ENCODE measurements at regions of chr3 and their contacts with region 1.

Region 1: DNA sequence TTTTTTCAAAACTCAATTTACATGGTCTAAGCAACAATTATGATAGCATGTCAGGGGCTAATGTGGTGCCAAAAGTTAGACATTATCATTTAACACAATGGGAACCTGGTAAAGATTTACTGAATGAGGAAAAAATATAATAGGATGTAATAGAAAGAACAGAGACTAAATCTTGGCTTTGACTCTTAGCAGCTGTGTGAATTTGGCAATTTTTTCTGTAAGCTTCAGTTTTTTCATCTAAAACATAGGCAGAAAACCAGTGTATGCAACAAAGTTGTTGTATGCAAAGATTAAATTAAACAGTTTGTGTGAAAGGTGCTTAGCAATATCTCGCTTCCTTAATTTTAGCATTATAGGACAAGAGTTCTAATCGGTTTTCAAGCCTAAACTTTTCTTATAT is 57.6 kb downstream of the ZBTB20 start:
- DNase-seq: no peak
- ATAC-seq: no peak

Region 2: GRCh38 chr3:115139072-115139471 is 49.6 kb after region 1 on chr3:
- intact Hi-C with region 1: loop called (anchors 2 kb)
- DNase-seq: no peak
- ATAC-seq: no peak

Measured in sciatic nerve (tissue), 2 donors.